ENCODE measurements at regions of chr2 and their contacts with region 1.

Region 1: GRCh38 chr2:190088917-190089316 is 26.4 kb upstream of the MSTN start:
- DNase-seq: peak; percentile 27
- ATAC-seq: peak; percentile 63 to 77

Region 2: GRCh38 chr2:190180313-190181122 is 91.6 kb after region 1 on chr2:
- intact Hi-C with region 1: loop called in 1 of 2 experiments (anchors 10 kb)
- DNase-seq: peak; percentile 78
- ATAC-seq: peak; percentile 89 to 91

Region 3: DNA sequence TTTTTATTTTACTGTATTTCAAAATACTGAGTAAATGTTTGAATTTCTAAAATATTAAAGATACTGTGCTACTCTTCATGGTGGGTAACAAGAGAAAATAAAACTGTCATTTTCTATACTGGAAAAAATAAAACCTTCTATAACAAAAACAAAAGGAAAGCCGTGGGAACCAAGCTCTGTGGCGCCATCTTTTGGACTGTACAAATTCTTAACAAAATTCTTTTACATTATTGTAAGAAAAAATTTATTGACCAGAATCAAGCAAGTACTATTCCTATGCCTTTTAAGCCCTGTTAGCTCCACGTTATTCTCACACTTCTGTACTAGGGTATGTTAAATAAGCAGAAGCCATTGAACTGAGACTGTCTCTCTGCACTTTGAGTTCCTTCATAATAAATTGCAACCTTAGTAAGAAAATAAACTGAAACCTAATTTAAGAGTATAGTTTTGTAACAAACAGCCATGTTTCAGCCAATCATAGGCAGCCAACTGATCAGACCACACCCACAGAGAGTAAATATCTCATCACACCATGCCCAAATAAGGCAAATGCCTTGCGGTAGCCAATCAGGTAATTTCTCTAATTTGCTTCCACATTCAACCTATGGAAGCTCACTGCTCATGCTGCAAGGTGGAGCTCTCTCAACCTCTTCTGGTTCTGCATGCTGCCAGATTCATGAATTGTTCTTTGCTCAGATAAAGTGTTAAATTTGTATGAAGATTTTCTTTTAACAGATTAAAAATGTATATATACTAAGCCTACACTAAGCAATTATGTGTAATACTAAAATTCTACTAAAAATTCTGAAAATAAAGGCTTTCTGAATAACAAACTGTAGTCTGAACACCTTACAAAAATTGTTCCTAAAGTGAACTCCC is 188.6 kb after region 1 on chr2:
- intact Hi-C with region 1: loop called (anchors 2 to 5 kb)
- DNase-seq: no peak
- ATAC-seq: no peak

Region 4: GRCh38 chr2:190369635-190370034 is 280.7 kb after region 1 on chr2:
- intact Hi-C with region 1: loop called in 1 of 2 experiments (anchors 5 kb)
- DNase-seq: no peak
- ATAC-seq: no peak

Region 5: DNA sequence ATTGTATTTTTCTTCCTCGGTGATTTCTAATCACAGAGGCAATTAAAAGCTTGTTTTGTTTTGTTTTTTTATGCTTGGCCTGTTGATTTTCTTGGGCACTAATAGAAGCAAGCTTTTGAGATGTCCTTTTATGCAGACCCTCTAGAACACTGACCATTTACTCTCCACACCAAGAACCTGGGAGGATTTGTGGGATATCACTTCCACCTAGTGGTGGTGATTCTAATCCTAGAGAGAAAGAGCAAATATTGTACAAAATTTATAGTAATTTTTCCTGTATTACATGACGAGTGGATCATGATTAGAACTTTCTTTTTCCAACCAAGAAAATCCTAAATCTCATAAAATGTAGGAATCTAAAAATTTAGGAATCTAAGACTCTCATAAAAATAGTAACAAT is 422.2 kb after region 1 on chr2:
- intact Hi-C with region 1: loop called in 1 of 2 experiments (anchors 10 kb)
- DNase-seq: no peak
- ATAC-seq: peak; percentile 37 to 53